ENCODE measurements at regions of chr7 and their contacts with region 1.

Region 1: GRCh38 chr7:151519765-151520418 is at the start of gene RHEB:
- DNase-seq: peak; percentile 99
- ATAC-seq: peak; percentile 90
- H3K4me3 Mint-ChIP-seq: peak within 1 kb of the TSS; percentile 84
- H3K27ac Mint-ChIP-seq: peak within 1 kb of the TSS; percentile 97
- H3K4me1 Mint-ChIP-seq: peaks cover 35% of the 10 kb centered on the region
- H3K27me3 Mint-ChIP-seq: no peaks in the 10 kb centered on the region
- total RNA-seq, gene RHEB: 42.8 to 43.0 TPM

Region 2: GRCh38 chr7:151226875-151227782 is 292.8 kb before region 1 on chr7 and contains the start of gene ABCF2:
- CTCF ChIA-PET with region 1: no interaction called
- POLR2A ChIA-PET with region 1: no interaction called
- intact Hi-C with region 1: loop called in 1 of 2 experiments (anchors 1 kb)
- DNase-seq: peak; percentile 99
- ATAC-seq: peak; percentile 100
- H3K4me3 Mint-ChIP-seq: peak within 1 kb of the TSS; percentile 92
- H3K27ac Mint-ChIP-seq: peak within 1 kb of the TSS; percentile 92
- H3K4me1 Mint-ChIP-seq: peaks cover 40% of the 10 kb centered on the region
- H3K27me3 Mint-ChIP-seq: no peaks in the 10 kb centered on the region
- total RNA-seq, gene ABCF2: 48.4 to 49.0 TPM

Region 3: DNA sequence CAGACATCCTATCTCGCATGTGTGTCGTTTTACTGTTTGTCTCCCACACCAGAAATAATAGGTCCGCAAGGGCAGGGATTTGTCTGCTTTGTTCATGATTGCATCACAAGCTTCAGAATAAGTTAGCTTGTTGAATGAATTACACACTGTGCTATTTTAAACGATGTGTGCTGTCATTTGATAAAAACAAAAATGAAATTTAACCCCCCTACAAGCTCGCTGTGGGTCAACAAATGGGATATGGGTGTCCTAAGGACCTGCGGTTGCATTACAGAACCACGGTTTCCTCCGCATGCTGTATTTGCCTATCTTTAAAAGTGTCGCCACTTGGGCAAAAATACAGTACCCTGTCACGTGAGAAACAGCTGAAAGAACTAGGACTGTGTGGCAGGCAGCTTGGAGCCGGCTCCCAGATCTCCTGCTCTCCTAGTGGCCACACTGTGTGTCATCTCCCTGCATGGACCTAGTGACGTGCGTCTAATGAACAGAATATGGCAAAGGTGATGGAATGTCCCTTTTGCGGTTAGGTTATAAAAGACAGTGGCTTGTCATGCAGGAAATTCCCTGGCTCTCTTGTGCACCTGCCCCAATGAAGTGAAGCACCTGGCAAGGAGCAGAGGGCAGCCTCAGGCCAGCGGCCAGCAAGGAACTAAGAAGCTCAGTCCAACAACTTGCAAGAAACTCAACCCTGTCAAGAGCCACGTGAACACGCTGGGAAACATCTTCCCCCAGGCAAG is 47.1 kb before region 1 on chr7:
- CTCF ChIA-PET with region 1: interaction called, 3 read pairs
- POLR2A ChIA-PET with region 1: interaction called, 3 read pairs
- intact Hi-C with region 1: loop called (anchors 2 to 5 kb)
- DNase-seq: no peak
- ATAC-seq: no peak
- H3K4me3 Mint-ChIP-seq: no peak overlapping the region
- H3K27ac Mint-ChIP-seq: peak overlapping the region; percentile 53
- H3K4me1 Mint-ChIP-seq: peaks cover 44% of the 10 kb centered on the region
- H3K27me3 Mint-ChIP-seq: no peaks in the 10 kb centered on the region

Region 4: GRCh38 chr7:151795168-151795811 is 275.4 kb after region 1 on chr7:
- CTCF ChIA-PET with region 1: no interaction called
- POLR2A ChIA-PET with region 1: no interaction called
- intact Hi-C with region 1: loop called in 1 of 2 experiments (anchors 1 kb)
- DNase-seq: peak; percentile 94
- ATAC-seq: peak; percentile 93
- H3K4me3 Mint-ChIP-seq: no peak overlapping the region
- H3K27ac Mint-ChIP-seq: peak overlapping the region; percentile 67
- H3K4me1 Mint-ChIP-seq: peaks cover 33% of the 10 kb centered on the region
- H3K27me3 Mint-ChIP-seq: no peaks in the 10 kb centered on the region

Measured in activated CD4-positive, alpha-beta T cell treated with anti-CD3 and anti-CD28 coated beads for 36 hours (primary cell).